Gastrocnemius medialis (tissue), 4 donors: ENCODE measurements at regions of chr2 and their contacts with region 1.

Region 1: DNA sequence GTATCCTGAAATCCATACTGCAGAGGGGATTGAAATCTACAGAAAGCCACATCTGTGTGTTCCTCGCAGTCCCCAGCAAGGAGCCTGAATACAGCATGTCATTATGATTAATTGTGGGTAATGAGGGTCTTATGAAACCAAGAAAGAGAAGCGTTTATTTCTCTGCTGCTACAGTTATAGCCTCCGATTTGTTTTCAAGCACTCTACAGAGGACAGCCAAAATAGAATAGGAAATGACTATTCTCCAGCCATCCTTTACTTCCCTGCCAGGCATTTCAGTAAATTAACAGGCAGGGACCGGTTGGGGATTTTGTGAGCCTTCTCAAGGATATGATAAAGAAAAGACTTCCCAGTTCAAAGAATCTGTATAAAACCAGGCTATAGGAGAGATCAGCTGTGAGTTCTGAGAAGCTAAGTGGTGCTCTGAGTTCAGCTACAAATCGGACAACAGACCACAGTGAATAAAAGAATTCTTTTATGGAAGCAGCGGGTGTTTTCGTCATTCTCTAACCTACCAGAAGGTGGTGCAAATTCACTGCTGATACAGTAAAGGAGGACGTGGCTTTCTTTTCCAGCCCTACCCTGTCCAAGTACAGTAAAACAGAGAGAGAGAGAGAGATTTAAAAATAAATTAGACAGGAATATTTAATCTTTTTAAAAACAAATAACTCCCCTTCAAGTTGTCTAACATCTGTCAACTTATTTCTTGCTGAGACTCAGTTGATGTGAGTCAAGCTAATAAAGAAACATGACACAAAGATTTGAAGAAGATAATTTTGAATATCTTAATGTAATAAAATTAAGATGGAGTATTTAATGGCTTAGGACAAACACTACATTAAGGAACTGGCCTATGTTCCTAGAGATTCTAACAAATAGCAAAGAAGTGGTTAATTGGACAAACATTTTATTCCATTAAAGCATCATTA is 133.7 kb downstream of the INSIG2 start:
- DNase-seq: peak; percentile 25 to 53
- ATAC-seq: peak; percentile 63 to 76
- H3K4me3 ChIP-seq: peak overlapping the region in 3 of 4 donors; percentile 59 to 72 (median 67)
- H3K27ac ChIP-seq: peak overlapping the region; percentile 88 to 92 (median 90)
- H3K4me1 ChIP-seq: peaks cover 20 to 21% of the 10 kb centered on the region in 2 donors
- H3K27me3 ChIP-seq: peaks cover 0 to 5% (median 0%) of the 10 kb centered on the region in 3 donors
- CTCF ChIP-seq: peak; percentile 67 to 81 (median 70)
- POLR2A ChIP-seq: no peak

Region 2: DNA sequence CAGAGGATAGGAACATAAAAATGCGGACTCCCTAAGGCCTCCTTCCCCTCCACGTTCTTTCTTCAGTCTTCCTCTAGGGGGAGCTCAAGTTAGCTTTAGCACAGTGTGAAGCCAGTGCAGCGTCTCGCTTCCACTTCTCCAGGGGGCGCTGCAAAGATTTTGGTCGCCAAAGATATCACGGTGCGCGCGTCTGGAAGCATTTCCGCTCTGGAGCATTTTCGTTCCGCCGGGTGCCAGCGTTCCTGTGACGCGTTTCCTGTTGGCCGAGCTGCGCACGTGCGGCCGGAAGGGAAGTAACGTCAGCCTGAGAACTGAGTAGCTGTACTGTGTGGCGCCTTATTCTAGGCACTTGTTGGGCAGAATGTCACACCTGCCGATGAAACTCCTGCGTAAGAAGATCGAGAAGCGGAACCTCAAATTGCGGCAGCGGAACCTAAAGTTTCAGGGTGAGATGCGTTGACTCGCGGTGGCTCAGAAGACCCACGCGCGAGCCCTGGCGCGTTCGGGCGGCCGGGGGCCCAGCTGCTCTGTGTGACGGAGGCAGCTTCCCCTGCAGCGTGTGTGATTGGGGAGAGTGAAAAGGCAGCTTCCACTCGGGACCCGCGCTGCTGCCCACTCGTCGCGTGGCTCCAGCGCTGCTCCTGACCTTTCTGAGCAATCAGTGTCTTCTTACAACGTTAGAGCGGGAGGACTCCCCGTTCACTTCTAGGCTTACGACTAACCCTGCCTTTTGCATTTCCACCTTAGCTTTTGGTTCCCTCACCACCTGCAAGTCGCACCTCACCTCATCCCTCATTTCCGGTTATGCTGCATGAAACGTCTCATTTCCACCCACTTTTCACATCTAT is 407.3 kb before region 1 on chr2 and contains the start of gene DDX18:
- in situ Hi-C with region 1: no loop called
- intact Hi-C with region 1: loop called (anchors 10 kb)
- DNase-seq: peak; percentile 94 to 95
- ATAC-seq: peak; percentile 98
- H3K4me3 ChIP-seq: peak within 1 kb of the TSS; percentile 80 to 87 (median 81)
- H3K27ac ChIP-seq: peak within 1 kb of the TSS; percentile 89 to 92 (median 92)
- H3K4me1 ChIP-seq: peaks cover 18 to 27% of the 10 kb centered on the region in 2 donors
- H3K27me3 ChIP-seq: no peaks in the 10 kb centered on the region
- CTCF ChIP-seq: peak; percentile 90 to 99 (median 99)
- POLR2A ChIP-seq: peak; percentile 63 to 68
- total RNA-seq, gene DDX18: 21.8 to 37.1 (median 24.7) TPM

Region 3: GRCh38 chr2:118576109-118576855 is 354.4 kb after region 1 on chr2:
- in situ Hi-C with region 1: no loop called
- intact Hi-C with region 1: loop called (anchors 10 kb)
- DNase-seq: no peak
- ATAC-seq: no peak
- H3K4me3 ChIP-seq: no peak overlapping the region
- H3K27ac ChIP-seq: no peak overlapping the region
- H3K4me1 ChIP-seq: peaks cover 6 to 10% of the 10 kb centered on the region in 2 donors
- H3K27me3 ChIP-seq: no peaks in the 10 kb centered on the region
- CTCF ChIP-seq: no peak
- POLR2A ChIP-seq: no peak

Region 4: DNA sequence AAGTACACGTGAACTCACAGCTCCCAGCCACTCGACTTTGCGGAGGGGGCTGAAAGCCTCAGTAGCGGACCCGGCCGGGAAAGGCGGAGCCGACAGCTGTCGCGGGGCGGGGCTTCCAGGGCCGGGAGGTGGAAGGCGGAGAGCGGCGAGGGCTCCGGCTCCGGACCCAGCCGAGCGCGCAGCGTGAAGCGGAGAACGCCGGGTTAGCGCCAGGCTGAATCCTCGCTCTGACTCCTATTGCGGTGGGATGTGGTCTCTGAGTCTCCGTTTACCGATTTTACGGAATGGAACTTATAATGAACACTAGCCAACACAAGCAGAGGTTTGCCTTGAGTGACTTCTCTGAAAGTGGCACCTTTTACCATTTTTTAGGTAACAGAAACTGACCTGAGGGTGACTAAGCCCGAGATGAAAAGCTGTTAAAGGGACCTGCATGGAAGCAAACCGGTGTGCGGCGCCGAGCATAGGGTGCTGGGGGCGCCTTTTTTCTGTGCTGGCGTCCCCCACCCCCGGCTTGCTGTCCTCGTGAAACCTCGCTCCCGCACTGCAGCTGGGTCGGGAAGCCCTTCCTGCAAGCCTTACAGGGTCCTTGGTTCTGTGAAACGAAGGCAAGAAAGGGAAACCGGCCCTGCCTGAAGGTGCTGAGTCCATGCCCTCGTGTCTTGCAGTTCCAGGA is 552.7 kb after region 1 on chr2:
- in situ Hi-C with region 1: loop called (anchors 10 to 25 kb)
- intact Hi-C with region 1: no loop called
- DNase-seq: peak; percentile 27 to 65
- ATAC-seq: peak; percentile 85 to 93
- H3K4me3 ChIP-seq: peak overlapping the region; percentile 53 to 66 (median 60)
- H3K27ac ChIP-seq: peak overlapping the region; percentile 78 to 85 (median 79)
- H3K4me1 ChIP-seq: peaks cover 0 to 12% of the 10 kb centered on the region in 2 donors
- H3K27me3 ChIP-seq: no peaks in the 10 kb centered on the region
- CTCF ChIP-seq: no peak
- POLR2A ChIP-seq: peak; percentile 47 to 49

Region 5: GRCh38 chr2:118865106-118865505 is 643.2 kb after region 1 on chr2:
- in situ Hi-C with region 1: loop called in 1 of 4 experiments (anchors 5 kb)
- intact Hi-C with region 1: no loop called
- DNase-seq: no peak
- ATAC-seq: peak; percentile 91 to 97
- H3K4me3 ChIP-seq: no peak overlapping the region
- H3K27ac ChIP-seq: no peak overlapping the region
- H3K4me1 ChIP-seq: no peaks in the 10 kb centered on the region
- H3K27me3 ChIP-seq: no peaks in the 10 kb centered on the region
- CTCF ChIP-seq: peak; percentile 47 to 70 (median 65)
- POLR2A ChIP-seq: no peak